Testis (tissue), 5 donors: ENCODE measurements at regions of chr16 and their contacts with region 1.

Region 1: DNA sequence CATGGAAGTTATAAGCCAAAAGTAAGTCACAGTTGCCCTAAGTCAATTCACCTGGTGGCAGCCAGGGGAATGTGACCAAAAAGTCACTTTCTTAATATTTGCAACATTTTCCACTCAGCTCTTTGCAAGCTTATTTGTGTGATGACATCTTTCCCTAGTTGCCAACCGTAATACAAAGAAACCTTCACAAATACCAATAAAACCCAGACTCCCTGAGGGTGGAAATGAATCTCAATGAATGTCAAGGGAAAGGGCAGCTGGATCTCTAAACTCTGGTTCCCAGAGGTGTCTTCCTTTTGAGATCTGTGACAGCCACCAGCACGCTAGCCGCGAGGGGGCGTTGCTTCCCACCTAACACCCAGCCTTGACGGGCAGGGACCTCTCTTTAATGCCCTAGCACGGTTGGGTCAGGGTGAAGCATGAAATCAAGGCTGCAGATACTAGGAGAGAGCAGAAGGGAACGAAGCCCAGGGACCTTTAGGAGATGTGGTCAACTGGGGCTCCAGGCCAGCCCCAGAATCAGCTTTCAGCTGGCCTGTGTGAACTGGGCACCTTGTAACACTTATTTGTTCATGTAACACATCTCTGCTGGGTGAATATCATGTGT is 82.2 kb downstream of the CMC2 start:
- DNase-seq: peak; percentile 76
- H3K4me3 ChIP-seq: no peak overlapping the region
- H3K27ac ChIP-seq: no peak overlapping the region
- H3K4me1 ChIP-seq: no peaks in the 10 kb centered on the region
- H3K27me3 ChIP-seq: no peaks in the 10 kb centered on the region
- CTCF ChIP-seq: peak; percentile 11 to 34 (median 16)
- POLR2A ChIP-seq: no peak

Region 2: GRCh38 chr16:80208015-80208414 is 716.5 kb before region 1 on chr16:
- intact Hi-C with region 1: no loop called
- DNase-seq: no peak
- H3K4me3 ChIP-seq: no peak overlapping the region
- H3K27ac ChIP-seq: no peak overlapping the region
- H3K4me1 ChIP-seq: no peaks in the 10 kb centered on the region
- H3K27me3 ChIP-seq: no peaks in the 10 kb centered on the region
- CTCF ChIP-seq: no peak
- POLR2A ChIP-seq: no peak

Region 3: GRCh38 chr16:80739523-80739922 is 185.0 kb before region 1 on chr16:
- intact Hi-C with region 1: no loop called
- DNase-seq: no peak
- H3K4me3 ChIP-seq: no peak overlapping the region
- H3K27ac ChIP-seq: no peak overlapping the region
- H3K4me1 ChIP-seq: peaks cover 7% of the 10 kb centered on the region
- H3K27me3 ChIP-seq: no peaks in the 10 kb centered on the region
- CTCF ChIP-seq: no peak
- POLR2A ChIP-seq: no peak

Region 4: DNA sequence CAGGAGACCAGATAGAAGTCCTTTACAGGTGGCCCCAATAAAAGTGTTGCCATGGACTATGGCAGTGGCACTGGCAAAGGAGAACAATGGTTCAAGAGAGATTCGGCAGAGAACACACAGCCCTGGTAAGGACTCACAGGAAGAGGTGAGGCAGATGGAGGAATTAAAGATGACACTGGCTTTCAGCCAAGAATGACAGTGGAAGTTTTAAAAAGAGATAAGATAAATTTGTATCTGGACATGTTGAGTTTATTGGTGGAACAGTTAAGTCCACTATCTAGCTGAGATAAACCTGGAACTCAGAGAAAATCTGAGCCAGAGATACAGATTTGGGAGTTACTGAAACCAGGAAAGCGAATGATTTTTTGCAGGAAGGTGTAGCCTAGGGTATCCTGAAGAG is 62.1 kb after region 1 on chr16:
- intact Hi-C with region 1: loop called (anchors 10 kb)
- DNase-seq: no peak
- H3K4me3 ChIP-seq: no peak overlapping the region
- H3K27ac ChIP-seq: no peak overlapping the region
- H3K4me1 ChIP-seq: no peaks in the 10 kb centered on the region
- H3K27me3 ChIP-seq: no peaks in the 10 kb centered on the region
- CTCF ChIP-seq: no peak
- POLR2A ChIP-seq: no peak